Breast epithelium (tissue), 4 donors: ENCODE measurements at regions of chr2 and their contacts with region 1.

Region 1: DNA sequence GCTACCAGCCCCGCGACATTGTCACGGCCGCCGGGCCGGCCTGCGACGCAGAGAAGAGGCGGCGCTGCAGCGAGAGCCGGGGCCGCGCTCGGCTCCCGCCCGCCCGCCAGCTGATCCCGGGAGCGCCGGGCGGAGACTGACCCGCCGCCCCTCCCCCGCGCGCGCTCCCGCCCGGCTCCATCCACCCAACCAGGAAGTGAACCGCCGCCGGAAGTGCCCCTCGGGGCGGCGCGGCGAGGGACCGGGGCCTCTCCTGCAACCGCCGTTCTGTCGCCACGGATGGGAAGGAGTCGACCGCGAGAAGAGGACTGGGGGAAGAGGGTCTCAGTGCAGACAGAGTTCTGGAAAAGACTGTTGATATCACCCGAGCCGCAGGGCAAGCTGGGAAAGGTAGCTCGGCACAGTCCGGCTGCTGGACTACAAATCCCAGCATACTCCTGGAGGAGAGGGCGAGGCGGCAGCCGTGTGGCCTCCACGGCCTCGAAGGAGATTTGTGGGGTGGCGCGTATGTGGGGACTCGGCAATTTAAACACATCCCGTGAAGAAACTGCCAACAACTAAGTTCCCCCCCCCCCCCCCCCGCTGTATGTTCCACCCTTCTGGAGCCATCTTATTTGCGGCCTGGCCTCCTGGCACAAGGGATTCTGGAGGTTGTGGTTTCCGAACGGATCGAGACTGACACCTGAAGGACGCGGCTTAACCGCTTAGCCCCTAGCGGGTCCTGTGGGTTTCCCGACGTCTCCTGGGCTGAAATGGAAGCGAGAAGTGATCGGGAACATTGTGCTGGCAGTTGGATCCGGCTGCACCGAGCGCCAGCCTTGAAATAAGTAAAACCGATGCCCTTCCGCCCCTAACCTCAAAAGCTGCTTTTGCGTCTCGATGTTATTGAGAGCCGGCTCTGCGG is at the start of gene AAK1:
- DNase-seq: peak; percentile 87 to 88
- H3K4me3 ChIP-seq: peak within 1 kb of the TSS; percentile 70 to 98 (median 91)
- H3K27ac ChIP-seq: peak within 1 kb of the TSS; percentile 94 to 95
- H3K4me1 ChIP-seq: no peaks in the 10 kb centered on the region
- H3K27me3 ChIP-seq: no peaks in the 10 kb centered on the region
- CTCF ChIP-seq: no peak
- POLR2A ChIP-seq: peak; percentile 7
- total RNA-seq, gene AAK1: 37.9 to 54.0 (median 44.9) TPM

Region 2: DNA sequence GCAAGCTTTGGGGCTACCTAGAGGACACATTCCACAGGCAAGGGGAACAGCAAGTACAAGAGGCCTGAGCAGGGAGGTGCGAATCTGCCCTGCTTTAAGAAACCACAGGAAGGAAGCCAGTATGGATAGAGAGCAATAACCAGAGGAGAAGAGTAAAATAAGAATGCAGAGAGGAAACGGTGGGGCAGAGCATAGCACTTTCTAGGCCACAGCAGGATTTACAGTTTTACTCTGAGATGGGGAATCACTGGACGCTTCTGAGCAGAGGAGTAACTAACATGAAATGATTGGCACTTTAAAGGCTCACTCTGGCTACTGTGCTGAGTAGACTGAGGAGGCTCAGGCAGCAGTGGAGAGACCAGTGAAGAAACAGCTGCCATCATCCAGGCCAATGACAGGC is 24.1 kb before region 1 on chr2:
- intact Hi-C with region 1: no loop called
- DNase-seq: no peak
- H3K4me3 ChIP-seq: no peak overlapping the region
- H3K27ac ChIP-seq: no peak overlapping the region
- H3K4me1 ChIP-seq: peaks cover 0 to 6% of the 10 kb centered on the region in 2 donors
- H3K27me3 ChIP-seq: no peaks in the 10 kb centered on the region
- CTCF ChIP-seq: no peak
- POLR2A ChIP-seq: no peak

Region 3: GRCh38 chr2:69704446-69704845 is 60.6 kb after region 1 on chr2:
- intact Hi-C with region 1: loop called (anchors 10 kb)
- DNase-seq: peak in 1 of 2 donors; percentile 80
- H3K4me3 ChIP-seq: no peak overlapping the region
- H3K27ac ChIP-seq: peak overlapping the region in 1 of 2 donors; percentile 75
- H3K4me1 ChIP-seq: no peaks in the 10 kb centered on the region
- H3K27me3 ChIP-seq: no peaks in the 10 kb centered on the region
- CTCF ChIP-seq: no peak
- POLR2A ChIP-seq: no peak

Region 4: GRCh38 chr2:69724540-69725159 is 80.8 kb after region 1 on chr2:
- intact Hi-C with region 1: loop called (anchors 5 kb)
- DNase-seq: peak; percentile 77 to 83
- H3K4me3 ChIP-seq: peak overlapping the region; percentile 10 to 58 (median 17)
- H3K27ac ChIP-seq: no peak overlapping the region
- H3K4me1 ChIP-seq: no peaks in the 10 kb centered on the region
- H3K27me3 ChIP-seq: no peaks in the 10 kb centered on the region
- CTCF ChIP-seq: peak; percentile 93 to 95 (median 94)
- POLR2A ChIP-seq: no peak

Region 5: GRCh38 chr2:70456585-70457495 is 813.0 kb after region 1 on chr2:
- intact Hi-C with region 1: loop called (anchors 5 kb)
- DNase-seq: no peak
- H3K4me3 ChIP-seq: no peak overlapping the region
- H3K27ac ChIP-seq: no peak overlapping the region
- H3K4me1 ChIP-seq: no peaks in the 10 kb centered on the region
- H3K27me3 ChIP-seq: no peaks in the 10 kb centered on the region
- CTCF ChIP-seq: no peak
- POLR2A ChIP-seq: no peak

Region 6: GRCh38 chr2:70948337-70949003 is 1304.6 kb after region 1 on chr2:
- intact Hi-C with region 1: no loop called
- DNase-seq: peak; percentile 56 to 80
- H3K4me3 ChIP-seq: peak overlapping the region; percentile 32 to 58 (median 42)
- H3K27ac ChIP-seq: no peak overlapping the region
- H3K4me1 ChIP-seq: no peaks in the 10 kb centered on the region
- H3K27me3 ChIP-seq: no peaks in the 10 kb centered on the region
- CTCF ChIP-seq: peak; percentile 29 to 87 (median 76)
- POLR2A ChIP-seq: no peak